ENCODE measurements at regions of chr18 and their contacts with region 1.

Region 1: GRCh38 chr18:62938487-62938886 is 223.1 kb downstream of the PHLPP1 start:
- DNase-seq: peak; percentile 15
- H3K4me3 ChIP-seq: no peak overlapping the region
- H3K27ac ChIP-seq: no peak overlapping the region
- H3K4me1 ChIP-seq: peaks cover 20% of the 10 kb centered on the region
- CTCF ChIP-seq: no peak

Region 2: GRCh38 chr18:62721839-62722795 is 216.4 kb before region 1 on chr18:
- CTCF ChIA-PET with region 1: no interaction called
- POLR2A ChIA-PET with region 1: no interaction called
- intact Hi-C with region 1: loop called (anchors 5 kb)
- DNase-seq: no peak
- H3K4me3 ChIP-seq: no peak overlapping the region
- H3K27ac ChIP-seq: no peak overlapping the region
- H3K4me1 ChIP-seq: peaks cover 19% of the 10 kb centered on the region
- CTCF ChIP-seq: no peak

Region 3: GRCh38 chr18:62952807-62953206 is 14.3 kb after region 1 on chr18:
- CTCF ChIA-PET with region 1: no interaction called
- POLR2A ChIA-PET with region 1: no interaction called
- intact Hi-C with region 1: no loop called
- DNase-seq: no peak
- H3K4me3 ChIP-seq: no peak overlapping the region
- H3K27ac ChIP-seq: no peak overlapping the region
- H3K4me1 ChIP-seq: no peaks in the 10 kb centered on the region
- CTCF ChIP-seq: no peak

Region 4: DNA sequence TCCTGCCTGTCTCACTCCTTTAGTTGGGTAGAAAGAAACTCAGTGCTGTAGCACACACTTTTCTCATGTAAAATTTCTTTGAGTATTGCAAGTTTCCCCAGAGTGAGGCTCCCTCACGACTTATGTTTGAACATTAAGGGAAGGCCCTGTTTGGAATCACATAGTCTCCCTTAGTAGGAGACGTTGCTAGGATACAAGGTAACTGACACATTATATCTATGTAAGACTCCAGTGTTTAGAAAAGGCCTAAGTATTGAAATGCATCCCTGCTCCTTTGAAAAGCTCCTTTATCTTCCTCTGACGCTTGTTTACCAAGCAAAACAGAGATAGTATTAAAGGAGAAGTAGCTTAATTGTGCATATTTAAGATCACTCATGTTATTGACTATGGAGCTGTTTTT is 25.0 kb after region 1 on chr18:
- CTCF ChIA-PET with region 1: no interaction called
- POLR2A ChIA-PET with region 1: no interaction called
- intact Hi-C with region 1: no loop called
- DNase-seq: no peak
- H3K4me3 ChIP-seq: no peak overlapping the region
- H3K27ac ChIP-seq: no peak overlapping the region
- H3K4me1 ChIP-seq: no peaks in the 10 kb centered on the region
- CTCF ChIP-seq: no peak